ENCODE measurements at regions of chr5 and their contacts with region 1.

Region 1: GRCh38 chr5:61666064-61666621 is 334.1 kb downstream of the ZSWIM6 start:
- DNase-seq: no peak
- ATAC-seq: peak; percentile 30
- H3K4me3 ChIP-seq: no peak overlapping the region
- H3K27ac ChIP-seq: no peak overlapping the region
- H3K4me1 ChIP-seq: no peaks in the 10 kb centered on the region
- H3K27me3 ChIP-seq: no peaks in the 10 kb centered on the region
- CTCF ChIP-seq: no peak
- POLR2A ChIP-seq: no peak

Region 2: DNA sequence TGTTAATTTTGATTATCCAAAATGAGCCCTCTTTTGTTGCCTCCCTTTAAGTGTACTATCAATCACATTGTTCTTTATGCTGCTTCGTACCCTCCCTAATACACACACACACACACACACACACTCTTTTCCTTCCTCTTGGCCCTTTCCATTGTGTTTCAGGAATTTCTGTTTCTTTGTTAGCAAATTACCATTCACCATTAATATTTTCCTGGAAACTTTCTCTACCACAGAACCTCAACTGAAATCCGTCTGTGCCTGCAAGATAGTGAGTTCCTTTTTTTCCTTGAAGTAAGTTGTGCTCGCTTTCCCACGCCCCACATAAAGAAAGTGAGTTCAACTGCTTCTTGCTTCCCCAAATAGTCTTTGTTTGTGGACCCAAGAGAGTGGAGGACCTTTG is 565.7 kb before region 1 on chr5:
- intact Hi-C with region 1: no loop called
- DNase-seq: no peak
- ATAC-seq: no peak
- H3K4me3 ChIP-seq: no peak overlapping the region
- H3K27ac ChIP-seq: no peak overlapping the region
- H3K4me1 ChIP-seq: no peaks in the 10 kb centered on the region
- H3K27me3 ChIP-seq: no peaks in the 10 kb centered on the region
- CTCF ChIP-seq: no peak
- POLR2A ChIP-seq: no peak

Region 3: GRCh38 chr5:61919920-61920319 is 253.8 kb after region 1 on chr5:
- intact Hi-C with region 1: loop called (anchors 10 kb)
- DNase-seq: peak; percentile 41 to 82 (median 70)
- ATAC-seq: peak; percentile 72
- H3K4me3 ChIP-seq: no peak overlapping the region
- H3K27ac ChIP-seq: peak overlapping the region in 1 of 4 donors; percentile 18
- H3K4me1 ChIP-seq: peaks cover 11% of the 10 kb centered on the region
- H3K27me3 ChIP-seq: no peaks in the 10 kb centered on the region
- CTCF ChIP-seq: no peak
- POLR2A ChIP-seq: no peak

Measured in body of pancreas (tissue), 4 donors.